ENCODE measurements at regions of chr1 and their contacts with region 1.

Region 1: GRCh38 chr1:153866045-153866850 is 56.5 kb downstream of the GATAD2B start:
- DNase-seq: peak; percentile 63
- ATAC-seq: no peak
- H3K4me3 ChIP-seq: no peak overlapping the region
- H3K27ac ChIP-seq: no peak overlapping the region
- H3K4me1 ChIP-seq: peaks cover 2% of the 10 kb centered on the region; the same call in 1 of the 2 replicates
- H3K27me3 ChIP-seq: no peaks in the 10 kb centered on the region
- CTCF ChIP-seq: no peak
- POLR2A ChIP-seq: no peak
- RAD21 ChIP-seq: no peak

Region 2: GRCh38 chr1:153977250-153978240 is 111.3 kb after region 1 on chr1 and contains the start of gene JTB:
- CTCF ChIA-PET with region 1: no interaction called
- POLR2A ChIA-PET with region 1: no interaction called
- dilution Hi-C with region 1: no loop called
- in situ Hi-C with region 1: no loop called
- intact Hi-C with region 1: no loop called
- DNase-seq: peak; percentile 78
- ATAC-seq: peak; percentile 95
- H3K4me3 ChIP-seq: peak within 1 kb of the TSS; percentile 65
- H3K27ac ChIP-seq: peak within 1 kb of the TSS; percentile 60
- H3K4me1 ChIP-seq: no peaks in the 10 kb centered on the region; the same call in 1 of the 2 replicates
- H3K27me3 ChIP-seq: no peaks in the 10 kb centered on the region
- CTCF ChIP-seq: no peak; the same call in 1 of the 2 replicates
- POLR2A ChIP-seq: peak; percentile 76
- RAD21 ChIP-seq: no peak
- total RNA-seq, gene JTB: 114 and 123 TPM in 2 replicates

Region 3: GRCh38 chr1:154170547-154171222 is 304.4 kb after region 1 on chr1:
- CTCF ChIA-PET with region 1: no interaction called
- POLR2A ChIA-PET with region 1: interaction called, 10 read pairs
- dilution Hi-C with region 1: no loop called
- in situ Hi-C with region 1: no loop called
- intact Hi-C with region 1: no loop called
- DNase-seq: no peak
- ATAC-seq: no peak; the same call in 1 of the 2 replicates
- H3K4me3 ChIP-seq: no peak overlapping the region
- H3K27ac ChIP-seq: no peak overlapping the region
- H3K4me1 ChIP-seq: peaks cover 2% of the 10 kb centered on the region; the same call in 1 of the 2 replicates
- H3K27me3 ChIP-seq: no peaks in the 10 kb centered on the region
- CTCF ChIP-seq: no peak
- POLR2A ChIP-seq: no peak
- RAD21 ChIP-seq: no peak

Region 4: DNA sequence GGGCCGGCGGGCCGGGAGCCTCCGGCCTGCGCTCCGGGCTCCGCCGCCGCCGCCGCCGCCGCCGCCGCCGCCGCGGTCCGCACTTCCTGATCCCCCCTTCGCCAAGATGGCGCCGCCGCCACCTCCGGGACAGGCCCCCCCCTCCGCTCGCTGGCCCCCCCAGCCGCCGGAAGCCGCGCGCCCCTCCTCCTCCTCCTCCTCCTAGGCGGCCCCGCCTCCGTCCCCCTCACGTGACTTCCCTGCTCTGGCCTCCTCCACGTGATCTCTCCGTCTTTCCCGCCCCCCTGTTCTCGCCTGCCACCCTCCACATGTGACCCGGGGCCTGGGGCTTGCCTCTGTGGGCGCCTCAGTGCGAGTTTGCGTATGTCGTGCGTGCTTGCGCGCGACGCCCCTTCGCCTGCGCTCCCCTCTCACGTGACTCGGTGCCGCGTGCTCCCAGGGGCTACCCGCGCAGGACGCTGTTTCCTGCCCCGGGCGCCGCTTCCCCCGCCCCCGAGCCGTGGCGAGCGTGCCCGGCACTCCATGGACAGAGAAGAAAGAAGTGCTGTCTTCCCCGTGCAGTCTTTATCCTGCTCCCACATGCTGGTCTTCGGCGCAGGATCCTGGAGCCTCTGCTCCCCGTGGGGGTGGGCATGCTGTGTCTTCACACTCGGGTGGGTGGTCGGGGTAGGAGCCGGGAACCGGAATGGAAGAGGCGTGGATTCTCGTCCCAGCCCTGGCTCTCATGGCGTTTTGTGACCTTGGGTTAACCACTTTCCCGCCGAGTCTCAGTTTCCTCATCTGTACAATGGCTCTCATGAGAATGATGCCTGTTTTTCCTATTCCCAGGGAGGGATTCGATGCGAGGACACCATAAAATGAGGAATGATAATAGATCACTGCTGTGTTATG is 692.6 kb after region 1 on chr1 and contains the start of gene UBE2Q1:
- CTCF ChIA-PET with region 1: no interaction called
- POLR2A ChIA-PET with region 1: no interaction called
- dilution Hi-C with region 1: no loop called
- in situ Hi-C with region 1: no loop called
- intact Hi-C with region 1: no loop called
- DNase-seq: peak; percentile 99
- ATAC-seq: peak; percentile 86
- H3K4me3 ChIP-seq: peak within 1 kb of the TSS; percentile 95
- H3K27ac ChIP-seq: peak within 1 kb of the TSS; percentile 94
- H3K4me1 ChIP-seq: peaks cover 3% of the 10 kb centered on the region
- H3K27me3 ChIP-seq: no peaks in the 10 kb centered on the region
- CTCF ChIP-seq: no peak
- POLR2A ChIP-seq: no peak
- RAD21 ChIP-seq: no peak
- total RNA-seq, gene UBE2Q1: 24.7 and 25.3 TPM in 2 replicates